G401 (cell line): ENCODE measurements at regions of chr5 and their contacts with region 1.

Region 1: DNA sequence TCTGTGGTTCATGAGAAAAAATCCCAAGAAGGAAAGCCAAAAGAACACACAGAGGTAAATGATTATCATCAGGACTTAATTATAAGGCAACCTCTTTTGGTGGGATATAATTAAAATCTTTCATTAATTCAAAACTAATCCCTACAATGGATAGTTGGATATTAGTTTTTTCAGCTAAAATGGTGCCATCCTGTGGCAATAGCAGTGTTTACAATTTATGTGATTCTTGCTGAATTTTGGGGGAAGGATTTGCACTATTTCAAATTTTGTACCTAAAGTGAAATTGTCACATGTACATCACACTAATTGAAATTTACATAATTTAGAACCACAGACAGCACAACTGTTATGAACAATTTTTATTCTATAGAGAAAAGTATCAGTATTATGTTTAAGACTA is 67.0 kb downstream of the CAST start:
- DNase-seq: no peak

Region 2: DNA sequence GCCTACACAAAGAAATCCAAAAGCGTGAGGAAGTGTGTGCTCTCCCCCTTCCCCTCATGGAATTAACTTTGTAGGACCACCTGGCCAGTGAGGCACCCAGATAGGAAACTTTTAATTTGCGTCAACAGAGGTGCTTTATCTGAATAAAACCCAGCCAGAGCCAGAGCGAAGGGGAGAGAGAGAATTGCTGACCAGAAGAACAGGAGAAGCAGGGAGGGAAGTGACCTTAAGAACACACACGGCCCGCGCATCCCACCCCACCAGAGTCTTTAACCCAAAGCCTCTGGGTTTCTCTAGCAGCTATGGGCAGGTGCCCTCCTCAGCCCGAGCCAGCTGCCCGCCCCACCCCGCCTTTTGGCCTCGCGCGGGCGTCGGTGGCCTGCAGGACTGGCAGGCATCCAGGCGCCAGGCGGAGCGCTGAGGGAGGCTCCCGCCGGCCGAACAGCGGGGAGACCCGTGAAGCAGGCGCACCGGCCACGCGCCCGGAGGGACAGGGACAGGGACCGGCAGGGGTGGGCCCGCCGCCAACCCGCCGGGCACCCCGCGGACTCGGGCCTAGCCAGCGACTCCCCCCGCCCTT is 78.0 kb after region 1 on chr5:
- in situ Hi-C with region 1: no loop called
- DNase-seq: peak; percentile 74

Region 3: DNA sequence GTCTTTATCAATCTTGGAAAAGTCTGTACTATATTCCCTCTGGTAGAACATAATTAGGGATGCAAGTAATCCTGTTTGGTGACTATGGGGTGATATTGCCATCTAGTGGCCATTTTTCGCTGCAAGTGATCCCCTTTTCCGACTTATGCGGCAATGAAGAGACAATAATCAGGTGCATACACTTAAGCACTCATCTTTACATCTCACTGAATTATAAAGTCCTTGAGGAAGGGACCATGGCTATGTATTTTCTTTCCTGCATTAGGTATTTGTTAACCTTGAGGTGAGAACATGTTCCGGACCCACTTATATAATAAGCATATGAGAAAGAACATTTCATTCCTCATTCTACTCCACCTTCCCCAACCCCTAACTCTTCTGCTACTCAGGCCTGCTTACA is 432.9 kb after region 1 on chr5:
- in situ Hi-C with region 1: loop called (anchors 25 kb)
- DNase-seq: peak; percentile 90

Region 4: GRCh38 chr5:97276474-97277120 is 547.4 kb after region 1 on chr5:
- in situ Hi-C with region 1: no loop called
- DNase-seq: no peak